ENCODE measurements at regions of chr1 and their contacts with region 1.

Region 1: GRCh38 chr1:89632657-89633247 is at the start of gene LRRC8C:
- DNase-seq: peak; percentile 89

Region 2: DNA sequence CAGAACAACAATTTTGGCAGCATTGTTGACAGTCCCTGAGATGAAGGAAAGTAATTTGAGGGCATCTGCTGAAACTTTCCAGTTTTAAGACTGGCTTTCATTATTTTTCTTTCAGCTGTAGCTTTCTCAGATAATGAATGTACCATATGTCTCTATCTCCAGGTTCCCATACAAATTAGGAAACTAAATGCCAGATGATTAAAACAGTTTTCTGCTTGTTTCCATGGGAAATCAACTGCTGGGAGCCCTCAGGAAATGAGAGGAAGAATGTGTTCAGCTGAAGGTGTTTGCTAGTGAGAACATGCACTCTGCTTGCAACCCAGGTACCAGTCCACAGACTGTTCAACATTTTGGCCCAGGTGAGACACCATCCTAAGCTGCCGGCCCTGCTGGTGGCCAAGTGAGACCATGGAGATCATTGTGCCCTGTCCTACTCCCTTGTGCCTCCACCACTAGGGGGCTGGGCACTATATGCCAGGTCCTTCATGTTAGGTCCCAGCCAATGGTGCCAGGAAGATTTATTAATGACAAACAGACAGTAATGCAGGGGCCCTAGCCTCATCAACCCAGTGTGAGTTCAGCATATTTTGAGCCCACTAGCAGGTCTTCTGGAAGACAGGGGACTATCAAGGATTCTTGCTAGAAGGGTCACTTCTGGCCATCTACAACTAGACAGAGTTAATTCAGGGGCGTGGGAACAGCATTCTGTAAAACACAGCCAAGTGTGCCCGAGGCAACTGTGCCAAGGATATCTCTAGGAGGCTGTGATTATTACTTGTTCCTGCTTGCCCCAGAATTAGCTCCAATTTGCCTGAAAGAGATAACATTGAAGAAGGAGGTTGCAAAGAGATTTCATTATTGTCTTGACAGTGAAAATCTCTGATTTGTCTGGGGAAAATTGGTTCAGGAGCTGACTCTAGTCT is 16.8 kb before region 1 on chr1:
- CTCF ChIA-PET with region 1: interaction called, 14 read pairs
- POLR2A ChIA-PET with region 1: no interaction called
- DNase-seq: peak; percentile 28

Measured in HEK293T (cell line).